HepG2 (cell line): ENCODE measurements at regions of chr12 and their contacts with region 1.

Region 1: GRCh38 chr12:100845095-100845494 is 50.5 kb downstream of the ANO4 start:
- DNase-seq: peak; percentile 1
- ATAC-seq: no peak
- H3K4me3 ChIP-seq: no peak overlapping the region
- H3K27ac ChIP-seq: no peak overlapping the region
- H3K4me1 ChIP-seq: no peaks in the 10 kb centered on the region
- H3K27me3 ChIP-seq: no peaks in the 10 kb centered on the region
- CTCF ChIP-seq: no peak
- EP300 ChIP-seq: no peak
- POLR2A ChIP-seq: no peak
- RAD21 ChIP-seq: no peak

Region 2: GRCh38 chr12:100128512-100128908 is 716.6 kb before region 1 on chr12:
- CTCF ChIA-PET with region 1: no interaction called
- POLR2A ChIA-PET with region 1: no interaction called
- in situ Hi-C with region 1: no loop called
- intact Hi-C with region 1: no loop called
- DNase-seq: peak; percentile 39
- ATAC-seq: peak; percentile 93
- H3K4me3 ChIP-seq: peak overlapping the region in 2 of 3 experiments; percentile 10 to 18; a peak in 1 of 6 replicates
- H3K27ac ChIP-seq: peak overlapping the region; percentile 42
- H3K4me1 ChIP-seq: peaks cover 30% of the 10 kb centered on the region
- H3K27me3 ChIP-seq: no peaks in the 10 kb centered on the region
- CTCF ChIP-seq: peak; percentile 68
- EP300 ChIP-seq: no peak
- POLR2A ChIP-seq: no peak
- RAD21 ChIP-seq: no peak

Region 3: GRCh38 chr12:100375038-100375735 is 469.9 kb before region 1 on chr12:
- CTCF ChIA-PET with region 1: no interaction called
- POLR2A ChIA-PET with region 1: no interaction called
- in situ Hi-C with region 1: no loop called
- intact Hi-C with region 1: no loop called
- DNase-seq: no peak
- ATAC-seq: no peak
- H3K4me3 ChIP-seq: no peak overlapping the region
- H3K27ac ChIP-seq: no peak overlapping the region
- H3K4me1 ChIP-seq: peaks cover 17% of the 10 kb centered on the region
- H3K27me3 ChIP-seq: peaks cover 0 to 1% of the 10 kb centered on the region in 2 experiments; a peak in 1 of 5 replicates
- CTCF ChIP-seq: no peak
- EP300 ChIP-seq: no peak
- POLR2A ChIP-seq: no peak
- RAD21 ChIP-seq: no peak

Region 4: GRCh38 chr12:100643246-100643645 is 201.8 kb before region 1 on chr12:
- CTCF ChIA-PET with region 1: no interaction called
- POLR2A ChIA-PET with region 1: no interaction called
- in situ Hi-C with region 1: no loop called
- intact Hi-C with region 1: no loop called
- DNase-seq: no peak
- ATAC-seq: no peak
- H3K4me3 ChIP-seq: no peak overlapping the region
- H3K27ac ChIP-seq: no peak overlapping the region
- H3K4me1 ChIP-seq: no peaks in the 10 kb centered on the region
- H3K27me3 ChIP-seq: no peaks in the 10 kb centered on the region
- CTCF ChIP-seq: no peak
- EP300 ChIP-seq: no peak
- POLR2A ChIP-seq: no peak
- RAD21 ChIP-seq: no peak

Region 5: GRCh38 chr12:100753837-100754236 is 91.3 kb before region 1 on chr12:
- CTCF ChIA-PET with region 1: no interaction called
- POLR2A ChIA-PET with region 1: no interaction called
- in situ Hi-C with region 1: no loop called
- intact Hi-C with region 1: no loop called
- DNase-seq: no peak
- ATAC-seq: no peak
- H3K4me3 ChIP-seq: no peak overlapping the region
- H3K27ac ChIP-seq: no peak overlapping the region
- H3K4me1 ChIP-seq: no peaks in the 10 kb centered on the region
- H3K27me3 ChIP-seq: no peaks in the 10 kb centered on the region
- CTCF ChIP-seq: no peak
- EP300 ChIP-seq: no peak
- POLR2A ChIP-seq: no peak
- RAD21 ChIP-seq: no peak

Region 6: GRCh38 chr12:100963381-100963780 is 118.3 kb after region 1 on chr12:
- CTCF ChIA-PET with region 1: no interaction called
- POLR2A ChIA-PET with region 1: no interaction called
- in situ Hi-C with region 1: no loop called
- intact Hi-C with region 1: loop called (anchors 10 kb)
- DNase-seq: no peak
- ATAC-seq: no peak
- H3K4me3 ChIP-seq: no peak overlapping the region
- H3K27ac ChIP-seq: no peak overlapping the region
- H3K4me1 ChIP-seq: no peaks in the 10 kb centered on the region
- H3K27me3 ChIP-seq: no peaks in the 10 kb centered on the region; a peak in 1 of 5 replicates
- CTCF ChIP-seq: no peak
- EP300 ChIP-seq: no peak
- POLR2A ChIP-seq: no peak
- RAD21 ChIP-seq: no peak